CD4-positive, alpha-beta T cell (primary cell): ENCODE measurements at regions of chr10 and their contacts with region 1.

Region 1: DNA sequence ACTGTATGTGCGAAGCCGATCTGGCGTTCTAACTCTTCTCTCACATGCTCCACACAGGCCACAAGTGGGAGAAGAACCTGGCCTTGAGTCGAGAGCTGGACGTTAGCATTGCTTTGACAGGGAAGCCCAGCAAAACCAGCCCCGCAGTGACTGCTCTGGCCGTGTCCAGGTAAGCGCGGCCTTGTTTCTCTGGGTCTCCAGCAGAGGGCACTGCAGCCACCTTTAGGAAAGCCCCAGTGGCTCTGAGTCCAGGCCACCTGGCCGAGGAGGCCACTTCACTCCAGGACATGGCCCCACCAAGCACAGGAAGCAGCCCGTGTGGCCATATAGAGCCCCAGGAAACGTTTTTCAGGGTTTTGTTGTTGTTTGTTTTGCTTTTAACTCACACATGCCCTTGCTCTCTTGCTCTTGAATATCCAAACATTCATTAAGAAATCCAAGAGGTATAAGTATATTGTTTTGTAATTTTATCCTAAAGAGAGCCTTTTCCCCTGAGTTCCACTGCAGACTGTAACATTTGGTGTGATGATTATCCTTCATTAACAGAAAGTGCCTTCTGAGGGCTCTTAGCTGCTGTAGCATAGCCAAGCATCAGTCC is 41.8 kb upstream of the LRRC18 start:
- DNase-seq: peak in 5 of 14 experiments; percentile 10 to 35 (median 27)
- ATAC-seq: no peak
- H3K4me3 ChIP-seq: no peak overlapping the region
- H3K4me3 Mint-ChIP-seq: no peak overlapping the region
- H3K27ac ChIP-seq: no peak overlapping the region
- H3K27ac Mint-ChIP-seq: no peak overlapping the region
- H3K4me1 ChIP-seq: no peaks in the 10 kb centered on the region
- H3K4me1 Mint-ChIP-seq: no peaks in the 10 kb centered on the region
- H3K27me3 ChIP-seq: no peaks in the 10 kb centered on the region
- H3K27me3 Mint-ChIP-seq: no peaks in the 10 kb centered on the region
- CTCF ChIP-seq: peak; percentile 70

Region 2: GRCh38 chr10:49053053-49053997 is 71.9 kb after region 1 on chr10:
- CTCF ChIA-PET with region 1: no interaction called
- POLR2A ChIA-PET with region 1: no interaction called
- intact Hi-C with region 1: no loop called
- DNase-seq: no peak
- ATAC-seq: no peak
- H3K4me3 ChIP-seq: no peak overlapping the region
- H3K4me3 Mint-ChIP-seq: no peak overlapping the region
- H3K27ac ChIP-seq: no peak overlapping the region
- H3K27ac Mint-ChIP-seq: no peak overlapping the region
- H3K4me1 ChIP-seq: no peaks in the 10 kb centered on the region
- H3K4me1 Mint-ChIP-seq: no peaks in the 10 kb centered on the region
- H3K27me3 ChIP-seq: no peaks in the 10 kb centered on the region
- H3K27me3 Mint-ChIP-seq: peaks cover 7% of the 10 kb centered on the region
- CTCF ChIP-seq: no peak

Region 3: DNA sequence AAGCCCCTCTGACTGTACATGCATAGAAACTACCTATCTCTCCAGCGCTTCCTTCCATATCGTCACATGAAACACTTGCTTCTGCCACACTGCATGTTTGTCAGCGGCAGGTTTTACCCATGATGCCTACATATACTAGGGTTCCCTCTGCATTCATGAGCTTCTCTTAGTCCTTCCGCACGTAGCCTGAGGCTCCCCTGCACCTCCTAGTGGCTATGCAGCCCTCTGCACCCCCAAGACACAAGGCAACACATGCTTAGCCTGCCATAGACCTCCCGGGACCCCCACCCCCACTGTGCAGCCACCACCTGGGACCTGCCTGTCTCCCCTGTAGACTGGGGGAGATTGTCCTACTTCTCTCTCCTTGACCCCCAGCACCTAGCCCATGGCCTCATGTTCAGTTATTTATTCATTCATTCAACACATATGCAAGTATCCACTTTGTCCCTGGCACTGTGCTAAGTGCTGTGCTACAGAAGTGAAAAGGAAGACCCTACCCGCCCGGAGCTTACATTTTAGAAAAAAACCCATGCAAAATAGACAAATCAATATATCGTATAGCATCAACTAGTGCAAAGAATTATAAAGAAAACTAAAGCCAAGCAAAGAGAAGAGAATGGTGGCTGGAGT is 183.3 kb after region 1 on chr10:
- CTCF ChIA-PET with region 1: no interaction called
- POLR2A ChIA-PET with region 1: no interaction called
- intact Hi-C with region 1: loop called (anchors 1 to 10 kb)
- DNase-seq: peak in 9 of 14 experiments; percentile 11 to 54 (median 27)
- ATAC-seq: peak; percentile 78
- H3K4me3 ChIP-seq: no peak overlapping the region
- H3K4me3 Mint-ChIP-seq: no peak overlapping the region
- H3K27ac ChIP-seq: no peak overlapping the region
- H3K27ac Mint-ChIP-seq: no peak overlapping the region
- H3K4me1 ChIP-seq: peaks cover 2% of the 10 kb centered on the region
- H3K4me1 Mint-ChIP-seq: peaks cover 7% of the 10 kb centered on the region
- H3K27me3 ChIP-seq: no peaks in the 10 kb centered on the region
- H3K27me3 Mint-ChIP-seq: no peaks in the 10 kb centered on the region
- CTCF ChIP-seq: no peak

Region 4: DNA sequence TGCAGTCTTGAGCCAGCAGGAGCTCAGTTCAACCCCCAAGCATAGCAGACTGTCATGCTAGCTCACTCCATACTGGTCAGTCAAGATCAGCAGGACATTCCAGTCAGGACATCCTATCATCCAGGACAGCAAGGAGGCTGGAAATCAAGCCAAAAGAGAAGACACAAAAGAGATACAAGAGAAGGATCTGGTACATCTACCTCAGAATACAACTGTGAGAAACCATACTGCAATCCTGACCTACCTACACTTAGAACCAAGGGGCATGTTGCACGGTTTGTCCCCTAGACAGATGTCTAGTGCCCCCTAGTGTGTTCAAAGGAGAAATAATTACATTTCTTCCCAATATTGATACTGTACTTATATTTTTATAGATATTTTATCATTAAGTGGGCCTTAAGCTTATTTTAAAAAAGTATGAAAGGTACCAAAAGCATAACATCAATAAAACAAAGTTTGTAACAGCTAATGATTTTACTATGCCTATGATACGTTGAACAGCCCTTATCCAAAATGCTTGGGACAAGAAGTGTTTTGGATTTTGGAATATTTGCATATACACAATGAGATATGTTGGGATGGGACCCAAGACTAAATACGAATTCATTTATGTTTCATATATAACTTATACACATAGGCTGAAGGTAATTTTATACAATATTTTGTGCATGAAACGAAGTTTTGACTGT is 530.9 kb after region 1 on chr10:
- CTCF ChIA-PET with region 1: no interaction called
- POLR2A ChIA-PET with region 1: no interaction called
- intact Hi-C with region 1: loop called in 1 of 2 experiments (anchors 2 kb)
- DNase-seq: peak in 4 of 14 experiments; percentile 15 to 58 (median 56)
- ATAC-seq: peak; percentile 51
- H3K4me3 ChIP-seq: no peak overlapping the region
- H3K4me3 Mint-ChIP-seq: no peak overlapping the region
- H3K27ac ChIP-seq: no peak overlapping the region
- H3K27ac Mint-ChIP-seq: no peak overlapping the region
- H3K4me1 ChIP-seq: peaks cover 10% of the 10 kb centered on the region
- H3K4me1 Mint-ChIP-seq: peaks cover 28% of the 10 kb centered on the region
- H3K27me3 ChIP-seq: peaks cover 0 to 2% of the 10 kb centered on the region in 2 experiments
- H3K27me3 Mint-ChIP-seq: peaks cover 20% of the 10 kb centered on the region
- CTCF ChIP-seq: peak; percentile 78